Common myeloid progenitor, CD34-positive (primary cell): ENCODE measurements at regions of chr10 and their contacts with region 1.

Region 1: DNA sequence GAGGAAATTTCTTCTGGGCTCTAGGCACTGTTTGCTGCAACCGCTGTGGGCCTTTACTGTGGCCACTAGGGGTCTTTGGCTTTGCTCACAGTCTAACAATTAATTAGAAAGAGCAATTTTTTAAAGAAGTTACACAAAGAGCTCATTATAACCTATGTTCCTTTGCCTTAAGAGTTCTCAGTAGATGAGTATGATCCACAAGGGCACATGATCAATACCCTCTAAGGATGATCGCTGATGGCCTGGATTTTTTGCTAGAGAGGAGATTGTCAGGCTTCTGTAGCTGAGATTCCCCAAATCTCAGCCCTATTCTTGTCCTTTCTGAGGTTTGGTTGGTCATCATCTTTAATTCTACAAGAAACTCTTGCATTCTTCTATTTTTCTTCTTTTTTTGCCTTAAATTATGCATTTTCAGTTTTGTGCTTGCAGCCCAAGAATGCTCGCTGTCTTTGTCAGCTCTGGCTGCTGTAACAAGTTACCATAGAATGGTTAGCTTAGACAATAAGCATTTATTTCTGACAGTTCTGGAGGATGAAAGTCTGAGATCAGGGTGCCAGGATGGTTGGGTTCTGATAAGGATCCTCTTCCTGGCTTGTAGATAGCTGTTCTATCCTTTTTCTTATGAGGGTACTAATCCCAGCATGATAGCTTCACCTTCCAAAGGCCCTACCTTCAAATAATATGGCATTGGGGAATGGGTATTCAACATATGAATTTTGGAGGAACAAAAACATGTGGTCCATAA is 81.0 kb upstream of the RHOBTB1 start:
- DNase-seq: peak; percentile 12 to 41 (median 37)
- H3K4me3 ChIP-seq: no peak overlapping the region
- H3K27ac ChIP-seq: no peak overlapping the region
- H3K4me1 ChIP-seq: no peaks in the 10 kb centered on the region
- H3K27me3 ChIP-seq: no peaks in the 10 kb centered on the region

Region 2: GRCh38 chr10:60944159-60944909 is 80.7 kb before region 1 on chr10 and contains the start of gene RHOBTB1:
- CTCF ChIA-PET with region 1: no interaction called
- POLR2A ChIA-PET with region 1: no interaction called
- DNase-seq: peak; percentile 66 to 90 (median 86)
- H3K4me3 ChIP-seq: peak within 1 kb of the TSS; percentile 70 to 87 (median 80)
- H3K27ac ChIP-seq: peak within 1 kb of the TSS; percentile 35 to 83
- H3K4me1 ChIP-seq: peaks cover 9 to 26% (median 15%) of the 10 kb centered on the region in 4 experiments
- H3K27me3 ChIP-seq: peaks cover 0 to 1% (median 0%) of the 10 kb centered on the region in 5 experiments

Region 3: DNA sequence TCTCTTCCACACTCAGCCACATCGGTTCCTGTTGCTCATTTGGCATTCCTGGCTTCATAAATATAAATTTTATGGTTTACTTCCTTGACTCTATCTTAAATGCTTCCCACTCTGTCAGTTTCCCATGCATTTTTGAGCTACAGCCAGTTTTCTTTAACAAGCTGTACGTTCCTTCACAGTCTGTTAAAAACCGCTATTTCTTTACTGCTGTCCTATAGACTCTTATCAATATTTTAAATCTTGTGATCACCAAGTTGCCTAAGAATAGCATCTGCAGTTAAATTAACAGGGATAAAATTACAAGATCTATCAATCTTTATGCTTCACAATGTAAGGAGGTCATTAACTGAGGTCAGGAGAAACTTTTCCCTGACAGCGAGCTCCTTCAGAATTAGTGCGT is 22.1 kb after region 1 on chr10:
- CTCF ChIA-PET with region 1: interaction called, 10 read pairs
- POLR2A ChIA-PET with region 1: no interaction called
- DNase-seq: no peak
- H3K4me3 ChIP-seq: no peak overlapping the region
- H3K27ac ChIP-seq: no peak overlapping the region
- H3K4me1 ChIP-seq: peaks cover 0 to 3% (median 0%) of the 10 kb centered on the region in 4 experiments
- H3K27me3 ChIP-seq: no peaks in the 10 kb centered on the region

Region 4: GRCh38 chr10:61120805-61121204 is 95.8 kb after region 1 on chr10:
- CTCF ChIA-PET with region 1: no interaction called
- POLR2A ChIA-PET with region 1: no interaction called
- DNase-seq: no peak
- H3K4me3 ChIP-seq: no peak overlapping the region
- H3K27ac ChIP-seq: no peak overlapping the region
- H3K4me1 ChIP-seq: peaks cover 4 to 18% (median 9%) of the 10 kb centered on the region in 4 experiments
- H3K27me3 ChIP-seq: no peaks in the 10 kb centered on the region